CD8-positive, alpha-beta T cell (primary cell): ENCODE measurements at regions of chr4 and their contacts with region 1.

Region 1: GRCh38 chr4:25312496-25313200 is at the start of gene ZCCHC4:
- DNase-seq: peak; percentile 80 to 97 (median 89)
- ATAC-seq: peak; percentile 99
- H3K4me3 ChIP-seq: peak within 1 kb of the TSS; percentile 83 to 95
- H3K4me3 Mint-ChIP-seq: peak within 1 kb of the TSS; percentile 99
- H3K27ac ChIP-seq: peak within 1 kb of the TSS; percentile 48 to 73
- H3K27ac Mint-ChIP-seq: peak within 1 kb of the TSS; percentile 96
- H3K4me1 ChIP-seq: peaks cover 9% of the 10 kb centered on the region
- H3K4me1 Mint-ChIP-seq: peaks cover 27% of the 10 kb centered on the region
- H3K27me3 ChIP-seq: no peaks in the 10 kb centered on the region
- H3K27me3 Mint-ChIP-seq: peaks cover 8% of the 10 kb centered on the region
- CTCF ChIP-seq: peak; percentile 99
- total RNA-seq, gene ZCCHC4: 6.5 to 9.9 TPM

Region 2: DNA sequence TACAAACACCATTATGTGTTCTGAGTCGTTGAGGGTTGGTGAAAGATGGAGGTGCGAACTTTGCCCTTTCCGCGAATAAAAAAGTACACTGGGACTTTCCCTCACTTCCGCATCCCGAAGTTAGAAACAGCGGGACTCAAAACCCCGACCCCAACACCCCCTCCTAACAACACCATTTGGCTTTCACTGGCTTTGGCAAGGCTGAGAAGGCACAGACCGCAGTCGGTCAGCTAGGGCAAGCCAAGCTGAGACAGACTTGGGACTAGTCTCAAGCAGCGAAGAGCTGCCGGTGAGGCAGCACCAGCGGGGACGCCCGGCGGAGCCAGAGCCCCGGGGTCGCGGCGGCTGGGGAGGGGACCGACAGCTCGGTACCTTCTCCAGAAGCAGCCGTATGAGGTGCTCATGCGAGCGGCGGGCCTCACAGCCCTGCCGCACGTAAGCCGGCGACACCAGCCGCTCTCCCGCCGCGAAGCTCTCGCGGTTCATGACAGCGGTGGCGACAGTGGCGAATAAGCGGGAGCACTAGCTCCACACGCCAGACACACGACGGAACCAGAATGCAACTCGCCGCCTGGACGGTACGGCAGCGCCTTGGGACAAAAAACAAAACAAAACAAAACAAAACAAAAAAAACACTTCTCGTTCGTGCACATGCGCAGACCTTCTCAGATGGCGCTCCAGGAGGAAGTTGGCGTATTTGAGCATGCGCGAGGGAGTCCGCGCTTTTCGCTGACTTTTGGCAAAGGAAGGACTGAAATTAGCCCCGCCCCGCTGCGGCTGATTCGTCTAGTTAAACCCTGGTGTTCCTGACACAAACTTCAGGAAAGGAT is 152.5 kb before region 1 on chr4 and contains the start of gene SEPSECS:
- CTCF ChIA-PET with region 1: interaction called, 11 read pairs
- POLR2A ChIA-PET with region 1: interaction called, 19 read pairs
- intact Hi-C with region 1: loop called (anchors 1 to 2 kb)
- DNase-seq: peak; percentile 82 to 99 (median 94)
- ATAC-seq: peak; percentile 79
- H3K4me3 ChIP-seq: peak within 1 kb of the TSS; percentile 60 to 79
- H3K4me3 Mint-ChIP-seq: peak within 1 kb of the TSS; percentile 91
- H3K27ac ChIP-seq: peak within 1 kb of the TSS; percentile 97 to 98
- H3K27ac Mint-ChIP-seq: peak within 1 kb of the TSS; percentile 94
- H3K4me1 ChIP-seq: peaks cover 18% of the 10 kb centered on the region
- H3K4me1 Mint-ChIP-seq: peaks cover 52% of the 10 kb centered on the region
- H3K27me3 ChIP-seq: no peaks in the 10 kb centered on the region
- H3K27me3 Mint-ChIP-seq: no peaks in the 10 kb centered on the region
- CTCF ChIP-seq: no peak
- total RNA-seq, gene SEPSECS: 12.5 to 13.4 TPM

Region 3: DNA sequence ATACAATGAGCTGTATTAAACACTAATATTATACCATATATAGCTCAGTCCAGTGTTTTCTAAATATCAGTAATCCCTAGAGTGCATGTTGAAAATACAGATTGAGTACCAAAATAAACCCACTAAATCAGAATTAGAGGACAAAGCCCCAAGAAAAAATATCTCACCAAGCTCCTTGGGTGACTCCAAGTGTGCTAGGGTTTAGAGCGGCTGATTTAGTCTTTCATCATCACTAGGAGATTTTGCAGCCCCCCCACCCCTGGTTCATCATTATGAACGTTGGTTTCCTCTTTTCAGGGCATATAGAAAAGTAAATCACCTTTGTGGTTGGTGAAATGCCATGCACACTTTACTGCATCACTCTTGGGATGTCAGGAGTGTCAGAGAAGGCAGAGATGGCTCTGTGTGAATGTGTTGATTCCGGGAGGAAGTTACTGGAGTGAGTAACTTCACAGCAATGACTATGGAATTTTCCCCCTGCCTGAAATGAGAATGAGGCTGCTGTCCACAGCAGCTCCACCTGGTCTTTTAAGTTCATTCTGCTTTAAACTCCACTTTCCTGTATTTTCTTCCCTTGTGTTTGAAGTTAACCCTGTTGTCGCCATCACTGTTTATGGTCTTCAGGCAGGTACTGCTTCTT is 39.2 kb after region 1 on chr4:
- CTCF ChIA-PET with region 1: interaction called, 10 read pairs
- POLR2A ChIA-PET with region 1: no interaction called
- intact Hi-C with region 1: no loop called
- DNase-seq: no peak
- ATAC-seq: no peak
- H3K4me3 ChIP-seq: no peak overlapping the region
- H3K4me3 Mint-ChIP-seq: no peak overlapping the region
- H3K27ac ChIP-seq: no peak overlapping the region
- H3K27ac Mint-ChIP-seq: no peak overlapping the region
- H3K4me1 ChIP-seq: no peaks in the 10 kb centered on the region
- H3K4me1 Mint-ChIP-seq: no peaks in the 10 kb centered on the region
- H3K27me3 ChIP-seq: no peaks in the 10 kb centered on the region
- H3K27me3 Mint-ChIP-seq: no peaks in the 10 kb centered on the region
- CTCF ChIP-seq: no peak

Region 4: DNA sequence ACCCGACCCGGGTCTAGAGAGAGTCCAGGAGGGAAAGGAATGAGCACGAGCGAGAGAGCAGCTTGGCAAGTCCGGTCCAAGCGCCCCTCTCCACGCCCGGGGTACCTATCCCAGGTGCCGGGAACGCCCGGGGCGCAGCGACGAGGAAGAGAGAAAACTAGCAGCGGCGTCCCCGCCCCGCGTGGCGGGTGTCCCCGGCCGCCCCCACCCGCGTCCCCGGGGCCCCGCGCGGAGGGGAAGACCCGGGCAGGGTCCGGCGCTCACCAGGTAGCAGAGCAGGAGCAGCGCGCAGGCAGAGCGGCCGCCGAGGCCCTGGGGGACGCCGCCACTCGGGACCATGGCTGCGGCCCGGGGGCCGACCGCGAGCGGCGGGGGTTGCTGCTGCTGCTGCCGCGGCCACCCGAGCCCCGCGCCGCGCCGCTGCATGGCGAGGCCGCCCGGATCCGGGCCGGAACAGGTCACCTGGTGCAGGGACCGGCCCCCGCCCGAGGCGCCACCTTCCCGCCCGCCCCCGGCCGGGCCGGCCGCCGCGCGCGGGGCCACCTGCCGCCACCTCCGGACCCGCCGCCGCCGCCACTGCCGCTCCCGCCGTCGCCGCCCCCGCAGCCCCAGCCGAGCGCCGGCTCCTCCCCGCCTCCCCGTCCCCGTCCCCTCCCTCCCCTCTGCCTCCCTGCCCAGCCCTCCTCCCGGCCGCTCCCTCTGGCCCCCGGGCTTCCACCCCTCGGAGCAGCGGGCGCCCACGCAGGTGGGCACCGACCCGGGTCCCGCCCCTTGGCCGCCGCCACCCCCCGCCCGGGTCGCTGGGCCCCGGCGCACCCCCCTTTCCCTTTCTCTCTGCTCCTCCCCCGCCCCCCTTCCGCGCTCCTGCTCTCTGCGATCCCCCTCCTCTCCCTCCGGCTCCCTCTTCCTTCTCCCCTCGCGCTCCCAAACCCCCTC is 550.0 kb after region 1 on chr4 and contains the start of gene SEL1L3:
- CTCF ChIA-PET with region 1: no interaction called
- POLR2A ChIA-PET with region 1: interaction called, 3 read pairs
- intact Hi-C with region 1: loop called in 1 of 2 experiments (anchors 10 kb)
- DNase-seq: peak in 8 of 9 experiments; percentile 34 to 71 (median 51)
- ATAC-seq: peak; percentile 37
- H3K4me3 ChIP-seq: peak within 1 kb of the TSS; percentile 71 to 72
- H3K4me3 Mint-ChIP-seq: peak within 1 kb of the TSS; percentile 100
- H3K27ac ChIP-seq: peak within 1 kb of the TSS; percentile 54 to 80
- H3K27ac Mint-ChIP-seq: peak within 1 kb of the TSS; percentile 91
- H3K4me1 ChIP-seq: peaks cover 40% of the 10 kb centered on the region
- H3K4me1 Mint-ChIP-seq: peaks cover 41% of the 10 kb centered on the region
- H3K27me3 ChIP-seq: no peaks in the 10 kb centered on the region
- H3K27me3 Mint-ChIP-seq: no peaks in the 10 kb centered on the region
- CTCF ChIP-seq: no peak
- total RNA-seq, gene SEL1L3: 31.2 to 33.7 TPM